WTC11 (cell line): ENCODE measurements at regions of chr15 and their contacts with region 1.

Region 1: GRCh38 chr15:45118131-45118588 is 4.0 kb downstream of the DUOXA2 start:
- DNase-seq: peak; percentile 93
- ATAC-seq: peak; percentile 92
- H3K4me3 Mint-ChIP-seq: peak overlapping the region; percentile 64
- H3K27ac Mint-ChIP-seq: no peak overlapping the region
- H3K4me1 Mint-ChIP-seq: peaks cover 30% of the 10 kb centered on the region
- H3K27me3 Mint-ChIP-seq: peaks cover 97% of the 10 kb centered on the region
- CTCF ChIP-seq: peak; percentile 86

Region 2: DNA sequence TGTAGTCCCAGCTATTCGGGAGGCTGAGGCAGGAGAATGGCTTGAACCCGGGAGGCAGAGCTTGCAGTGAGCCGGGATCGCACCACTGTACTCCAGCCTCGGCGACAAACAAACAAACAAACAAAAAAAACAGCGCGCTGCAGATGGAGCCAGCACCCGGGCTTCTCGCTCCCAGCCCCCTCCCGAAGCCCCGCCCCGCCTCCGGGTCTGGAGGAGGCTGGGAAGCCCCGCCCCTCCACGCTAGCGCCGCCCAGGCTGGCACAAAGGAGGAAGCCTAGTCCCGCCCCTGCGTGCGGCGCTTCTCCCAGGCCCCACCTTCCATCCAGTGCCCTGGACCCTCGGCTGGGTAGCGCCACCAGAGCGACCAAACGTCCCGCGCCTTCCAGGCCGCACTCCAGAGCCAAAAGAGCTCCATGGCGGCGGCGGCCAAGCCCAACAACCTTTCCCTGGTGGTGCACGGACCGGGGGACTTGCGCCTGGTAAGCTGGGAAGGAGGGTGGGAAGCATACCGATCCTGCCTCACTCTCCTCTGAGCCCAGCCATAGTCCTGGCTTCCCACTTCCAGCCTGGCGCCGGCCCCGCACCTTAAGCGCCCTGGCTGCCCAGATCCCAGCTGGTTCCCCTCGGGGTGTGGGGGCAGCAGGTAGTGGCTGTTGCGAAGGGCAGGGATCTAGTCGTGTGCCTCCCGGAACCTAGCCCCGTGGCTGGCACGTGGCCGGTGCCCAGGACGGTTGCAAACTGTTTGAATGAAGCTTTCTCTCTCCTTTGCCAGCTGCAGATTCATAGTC is 95.1 kb before region 1 on chr15 and contains the start of gene SORD:
- CTCF ChIA-PET with region 1: interaction called, 10 read pairs
- POLR2A ChIA-PET with region 1: interaction called, 3 read pairs
- DNase-seq: peak; percentile 99
- ATAC-seq: peak; percentile 99
- H3K4me3 Mint-ChIP-seq: peak within 1 kb of the TSS; percentile 80
- H3K27ac Mint-ChIP-seq: peak within 1 kb of the TSS; percentile 32; the same call in 1 of the 2 replicates
- H3K4me1 Mint-ChIP-seq: peaks cover 23% of the 10 kb centered on the region
- H3K27me3 Mint-ChIP-seq: peaks cover 34% of the 10 kb centered on the region
- CTCF ChIP-seq: no peak
- total RNA-seq, gene SORD: 46.2 to 48.9 TPM (median 46.4 TPM) in 3 replicates

Region 3: GRCh38 chr15:45100884-45101622 is 17.1 kb before region 1 on chr15:
- CTCF ChIA-PET with region 1: interaction called, 28 read pairs
- POLR2A ChIA-PET with region 1: no interaction called
- DNase-seq: no peak
- ATAC-seq: peak; percentile 70
- H3K4me3 Mint-ChIP-seq: no peak overlapping the region
- H3K27ac Mint-ChIP-seq: no peak overlapping the region
- H3K4me1 Mint-ChIP-seq: peaks cover 21% of the 10 kb centered on the region
- H3K27me3 Mint-ChIP-seq: peaks cover 9% of the 10 kb centered on the region; the same call in 1 of the 2 replicates
- CTCF ChIP-seq: no peak

Region 4: DNA sequence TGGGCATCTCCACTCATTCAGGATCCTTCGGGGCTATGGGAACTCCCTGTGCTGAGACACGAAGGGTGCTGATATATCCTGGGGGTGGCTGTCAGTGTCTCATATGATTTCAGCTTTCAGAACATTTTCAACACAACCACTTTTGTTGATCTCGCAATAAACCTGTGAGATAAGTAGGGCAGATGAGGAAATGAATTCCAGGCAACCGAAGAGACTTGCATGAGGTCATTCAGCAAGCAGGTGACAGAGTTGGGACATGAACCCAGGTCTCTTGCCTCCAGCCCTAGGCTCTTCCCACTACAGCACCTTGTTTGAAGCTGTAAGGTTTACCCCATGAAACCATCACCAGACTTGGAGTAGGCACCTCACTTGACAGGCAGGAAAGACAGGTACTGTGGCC is 28.2 kb after region 1 on chr15:
- CTCF ChIA-PET with region 1: interaction called, 11 read pairs
- POLR2A ChIA-PET with region 1: interaction called, 5 read pairs
- DNase-seq: no peak
- ATAC-seq: no peak
- H3K4me3 Mint-ChIP-seq: no peak overlapping the region
- H3K27ac Mint-ChIP-seq: no peak overlapping the region
- H3K4me1 Mint-ChIP-seq: peaks cover 3% of the 10 kb centered on the region; the same call in 1 of the 2 replicates
- H3K27me3 Mint-ChIP-seq: peaks cover 11% of the 10 kb centered on the region
- CTCF ChIP-seq: no peak

Region 5: DNA sequence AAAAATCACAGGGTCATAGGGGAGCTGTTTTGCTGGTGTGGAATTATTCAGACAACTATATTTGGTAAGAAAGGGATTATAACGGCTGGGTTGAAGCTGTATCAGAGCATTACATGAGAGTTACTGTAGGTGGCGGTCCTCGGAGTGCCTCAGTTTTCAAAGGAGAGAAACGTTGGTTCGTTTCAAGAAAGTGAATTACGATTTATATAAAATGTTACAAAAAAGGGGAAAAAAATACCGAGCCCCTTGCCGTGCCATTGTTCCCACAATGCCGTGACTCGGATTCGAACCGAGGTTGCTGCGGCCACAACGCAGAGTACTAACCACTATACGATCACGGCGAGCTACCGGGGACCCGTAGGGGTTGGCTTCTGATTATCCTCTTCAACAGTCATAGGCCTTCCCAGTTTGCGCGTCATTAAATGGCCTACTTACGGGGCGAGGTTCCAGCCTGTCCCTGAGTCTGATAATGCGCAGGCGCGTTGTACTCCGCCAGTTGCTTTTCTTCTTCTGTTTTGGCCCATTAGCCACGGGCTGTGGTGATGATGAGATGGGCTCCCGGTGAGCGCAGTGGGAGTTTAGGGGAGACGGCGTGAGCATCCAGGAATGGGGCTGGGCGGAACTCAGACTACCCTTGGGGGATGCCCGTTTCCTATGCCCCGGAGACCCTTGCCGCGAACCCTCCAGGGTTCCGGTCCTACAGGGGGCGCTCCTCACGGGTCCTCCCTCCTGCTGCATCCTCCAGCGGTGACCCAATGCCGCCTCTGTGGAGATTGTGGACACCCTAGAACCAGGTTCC is 80.4 kb after region 1 on chr15:
- CTCF ChIA-PET with region 1: interaction called, 15 read pairs
- POLR2A ChIA-PET with region 1: no interaction called
- DNase-seq: peak; percentile 90
- ATAC-seq: peak; percentile 62
- H3K4me3 Mint-ChIP-seq: no peak overlapping the region
- H3K27ac Mint-ChIP-seq: peak overlapping the region; percentile 87
- H3K4me1 Mint-ChIP-seq: peaks cover 7% of the 10 kb centered on the region
- H3K27me3 Mint-ChIP-seq: peaks cover 4% of the 10 kb centered on the region
- CTCF ChIP-seq: peak; percentile 46

Region 6: DNA sequence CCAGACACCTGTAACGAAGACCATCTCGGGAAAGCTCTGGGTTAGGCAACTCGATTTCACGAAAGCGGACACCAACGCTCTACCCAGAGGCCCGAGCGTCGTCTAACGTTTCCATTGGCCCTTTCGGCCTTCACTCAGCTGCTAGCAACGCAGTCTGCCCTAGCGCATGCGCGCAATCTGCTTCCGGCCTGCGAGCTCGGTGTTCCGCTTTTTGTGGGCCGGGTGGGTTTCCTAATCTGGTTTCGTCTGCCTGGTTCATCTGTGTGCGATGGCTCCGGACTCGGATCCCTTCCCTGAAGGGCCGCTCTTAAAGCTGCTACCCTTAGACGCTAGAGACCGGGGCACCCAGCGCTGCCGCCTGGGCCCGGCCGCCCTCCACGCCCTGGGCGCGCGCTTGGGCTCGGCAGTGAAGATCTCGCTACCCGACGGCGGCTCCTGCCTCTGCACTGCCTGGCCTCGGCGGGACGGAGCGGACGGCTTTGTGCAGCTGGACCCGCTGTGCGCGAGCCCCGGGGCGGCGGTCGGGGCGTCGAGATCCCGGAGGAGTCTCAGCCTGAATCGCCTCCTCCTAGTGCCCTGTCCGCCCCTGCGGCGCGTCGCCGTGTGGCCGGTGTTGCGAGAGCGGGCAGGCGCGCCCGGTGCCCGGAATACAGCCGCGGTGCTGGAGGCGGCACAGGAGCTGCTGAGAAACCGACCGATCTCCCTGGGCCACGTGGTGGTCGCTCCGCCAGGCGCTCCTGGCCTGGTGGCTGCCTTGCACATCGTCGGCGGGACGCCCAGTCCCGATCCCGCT is 284.2 kb after region 1 on chr15:
- CTCF ChIA-PET with region 1: interaction called, 16 read pairs
- POLR2A ChIA-PET with region 1: no interaction called
- DNase-seq: peak; percentile 91
- ATAC-seq: peak; percentile 97
- H3K4me3 Mint-ChIP-seq: peak overlapping the region; percentile 95
- H3K27ac Mint-ChIP-seq: no peak overlapping the region
- H3K4me1 Mint-ChIP-seq: peaks cover 18% of the 10 kb centered on the region
- H3K27me3 Mint-ChIP-seq: peaks cover 7% of the 10 kb centered on the region
- CTCF ChIP-seq: no peak